ENCODE measurements at regions of chr15 and their contacts with region 1.

Region 1: GRCh38 chr15:44738340-44738984 is 2.1 kb downstream of the TRIM69 start:
- DNase-seq: peak in 2 of 5 donors; percentile 53 to 69
- H3K4me3 ChIP-seq: no peak overlapping the region
- H3K27ac ChIP-seq: no peak overlapping the region
- H3K4me1 ChIP-seq: no peaks in the 10 kb centered on the region
- H3K27me3 ChIP-seq: no peaks in the 10 kb centered on the region
- CTCF ChIP-seq: peak; percentile 33

Region 2: GRCh38 chr15:44663409-44664308 is 74.8 kb before region 1 on chr15 and contains the start of gene SPG11:
- intact Hi-C with region 1: loop called (anchors 5 kb)
- DNase-seq: peak; percentile 99
- H3K4me3 ChIP-seq: peak within 1 kb of the TSS; percentile 81 to 94 (median 92)
- H3K27ac ChIP-seq: peak within 1 kb of the TSS; percentile 95
- H3K4me1 ChIP-seq: peaks cover 0 to 7% (median 3%) of the 10 kb centered on the region in 3 donors
- H3K27me3 ChIP-seq: no peaks in the 10 kb centered on the region
- CTCF ChIP-seq: peak; percentile 86
- total RNA-seq, gene SPG11: 100 TPM

Region 3: GRCh38 chr15:45064386-45064785 is 325.9 kb after region 1 on chr15:
- intact Hi-C with region 1: no loop called
- DNase-seq: no peak
- H3K4me3 ChIP-seq: no peak overlapping the region
- H3K27ac ChIP-seq: no peak overlapping the region
- H3K4me1 ChIP-seq: no peaks in the 10 kb centered on the region
- H3K27me3 ChIP-seq: no peaks in the 10 kb centered on the region
- CTCF ChIP-seq: no peak